Gastrocnemius medialis (tissue), 4 donors: ENCODE measurements at regions of chr5 and their contacts with region 1.

Region 1: DNA sequence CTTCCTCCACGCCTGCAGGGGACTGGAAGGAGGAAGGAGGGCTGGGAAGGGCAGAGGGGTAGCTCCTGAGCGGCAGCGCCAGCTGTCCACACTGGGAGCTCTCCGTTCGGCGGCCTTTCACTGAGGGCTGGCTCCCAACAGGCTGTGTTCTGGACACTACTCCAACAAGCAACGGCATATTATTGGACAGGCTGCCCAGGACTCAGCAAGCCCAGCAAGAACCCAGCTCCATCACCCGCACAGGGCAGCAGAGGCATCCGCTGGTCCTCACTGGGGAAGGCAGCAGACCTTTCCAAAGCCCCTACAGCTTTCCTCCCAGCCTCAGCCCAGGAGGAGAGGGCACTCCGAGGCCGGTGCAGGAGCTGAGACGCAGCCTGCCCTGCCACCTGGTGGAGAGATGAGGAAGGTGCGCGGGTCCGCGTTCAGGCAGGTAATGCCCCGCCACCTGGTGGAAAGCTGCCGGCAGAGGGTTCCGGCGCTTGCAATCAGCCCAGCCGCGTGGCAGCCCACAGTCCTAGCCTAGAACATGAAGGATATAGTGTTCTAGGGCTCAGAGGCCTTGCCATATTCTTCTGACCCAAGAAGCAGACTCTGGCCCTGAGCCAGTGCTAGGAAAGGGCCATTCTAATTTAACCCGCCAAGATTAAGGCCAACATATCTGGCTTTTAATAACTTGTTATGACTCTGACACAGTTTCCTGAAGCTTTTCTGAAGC is 74.4 kb downstream of the NRG2 start:
- DNase-seq: peak; percentile 86 to 91
- ATAC-seq: peak; percentile 83 to 87
- H3K4me3 ChIP-seq: peak overlapping the region in 1 of 4 donors; percentile 17
- H3K27ac ChIP-seq: peak overlapping the region; percentile 79 to 88 (median 82)
- H3K4me1 ChIP-seq: peaks cover 36 to 61% of the 10 kb centered on the region in 2 donors
- H3K27me3 ChIP-seq: no peaks in the 10 kb centered on the region
- CTCF ChIP-seq: peak; percentile 99 to 100 (median 100)
- POLR2A ChIP-seq: no peak

Region 2: GRCh38 chr5:139795074-139796001 is 173.4 kb before region 1 on chr5 and contains the start of gene PSD2:
- in situ Hi-C with region 1: loop called in 2 of 4 experiments (anchors 5 to 10 kb)
- intact Hi-C with region 1: no loop called
- DNase-seq: no peak
- ATAC-seq: peak; percentile 59 to 64
- H3K4me3 ChIP-seq: peak within 1 kb of the TSS; percentile 44 to 53 (median 49)
- H3K27ac ChIP-seq: no peak within 1 kb of the TSS
- H3K4me1 ChIP-seq: peaks cover 0 to 7% of the 10 kb centered on the region in 2 donors
- H3K27me3 ChIP-seq: peaks cover 20 to 28% (median 22%) of the 10 kb centered on the region in 3 donors
- CTCF ChIP-seq: no peak
- POLR2A ChIP-seq: no peak
- total RNA-seq, gene PSD2: 0.10 TPM in 1 of 4 donors, not detected in the others

Region 3: DNA sequence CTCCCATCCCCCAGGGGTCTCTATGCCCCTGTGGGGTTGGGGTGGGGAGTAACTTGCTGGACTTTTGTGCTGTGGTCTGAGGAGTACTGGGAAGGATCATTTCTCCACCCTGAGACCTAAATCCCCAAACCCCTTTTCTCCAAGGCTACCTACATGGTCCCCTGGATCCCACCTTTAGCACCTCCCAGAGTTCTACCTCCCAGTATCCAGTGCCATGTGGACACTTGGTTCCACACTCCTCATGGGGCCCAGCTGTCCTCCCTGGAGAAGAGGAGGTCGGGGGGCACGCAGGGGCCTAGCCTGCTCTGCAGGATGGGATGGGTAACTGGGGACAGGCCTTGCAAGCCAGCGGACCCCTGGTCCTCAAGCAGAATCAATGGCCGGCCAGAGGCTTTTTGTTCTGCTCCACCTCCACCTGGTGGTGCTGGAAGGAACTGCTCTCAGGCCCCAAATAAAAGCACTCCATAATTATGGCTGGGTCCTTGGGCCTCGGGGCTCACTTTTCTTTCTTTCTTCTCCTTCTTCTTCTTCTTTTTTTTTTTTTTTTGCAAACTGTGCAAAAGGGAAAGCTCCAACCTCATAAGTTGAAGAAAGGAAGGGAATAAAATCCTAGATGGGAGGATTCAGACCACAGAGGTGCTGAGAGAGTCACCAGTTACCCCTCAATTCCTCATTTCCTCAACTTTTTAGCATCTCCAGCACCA is 104.7 kb before region 1 on chr5:
- in situ Hi-C with region 1: loop called in 1 of 4 experiments (anchors 25 kb)
- intact Hi-C with region 1: loop called (anchors 5 kb)
- DNase-seq: peak in 1 of 2 donors; percentile 52
- ATAC-seq: peak; percentile 72 to 73
- H3K4me3 ChIP-seq: no peak overlapping the region
- H3K27ac ChIP-seq: peak overlapping the region in 2 of 4 donors; percentile 29 to 47
- H3K4me1 ChIP-seq: peaks cover 9 to 13% of the 10 kb centered on the region in 2 donors
- H3K27me3 ChIP-seq: no peaks in the 10 kb centered on the region
- CTCF ChIP-seq: peak; percentile 70 to 84 (median 83)
- POLR2A ChIP-seq: no peak

Region 4: DNA sequence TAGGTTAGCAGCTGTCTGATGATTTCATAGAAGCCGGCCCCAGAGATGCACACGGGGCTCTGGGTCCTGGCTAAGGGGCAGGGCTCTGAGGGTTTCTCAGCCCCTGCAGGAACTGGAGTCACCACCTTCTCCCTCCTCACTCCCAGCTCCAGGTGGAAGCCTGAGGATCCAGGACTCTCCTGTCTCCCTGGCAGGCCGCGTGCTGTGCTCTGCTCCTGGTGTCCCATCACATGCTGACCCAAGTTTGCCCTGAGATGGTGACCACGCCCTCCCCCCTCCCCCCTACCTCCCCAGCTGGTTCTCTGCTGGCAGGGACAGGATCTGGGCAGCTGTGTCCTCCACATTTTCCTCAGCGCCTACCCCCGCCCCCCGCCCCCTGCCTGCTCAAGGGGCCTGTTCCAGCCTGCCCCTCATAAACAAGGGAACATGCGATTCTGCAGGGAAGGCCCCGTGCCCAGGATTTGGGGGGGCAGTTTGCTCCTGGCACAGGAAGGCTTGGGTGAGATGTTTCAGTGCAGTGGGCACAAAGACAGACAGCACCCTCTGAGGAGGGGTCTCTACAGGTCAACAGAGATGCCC is 85.7 kb before region 1 on chr5:
- in situ Hi-C with region 1: no loop called
- intact Hi-C with region 1: loop called (anchors 5 kb)
- DNase-seq: peak; percentile 53 to 67
- ATAC-seq: peak; percentile 35 to 59
- H3K4me3 ChIP-seq: no peak overlapping the region
- H3K27ac ChIP-seq: peak overlapping the region in 1 of 4 donors; percentile 66
- H3K4me1 ChIP-seq: peaks cover 18 to 19% of the 10 kb centered on the region in 2 donors
- H3K27me3 ChIP-seq: no peaks in the 10 kb centered on the region
- CTCF ChIP-seq: no peak
- POLR2A ChIP-seq: no peak

Region 5: GRCh38 chr5:139903795-139904565 is 64.7 kb before region 1 on chr5:
- in situ Hi-C with region 1: no loop called
- intact Hi-C with region 1: loop called (anchors 2 kb)
- DNase-seq: no peak
- ATAC-seq: peak; percentile 22 to 34
- H3K4me3 ChIP-seq: peak overlapping the region; percentile 53 to 76 (median 62)
- H3K27ac ChIP-seq: peak overlapping the region in 1 of 4 donors; percentile 1
- H3K4me1 ChIP-seq: peaks cover 12 to 26% of the 10 kb centered on the region in 2 donors
- H3K27me3 ChIP-seq: no peaks in the 10 kb centered on the region
- CTCF ChIP-seq: no peak
- POLR2A ChIP-seq: peak in 1 of 2 donors; percentile 12

Region 6: GRCh38 chr5:139949710-139950109 is 19.0 kb before region 1 on chr5:
- in situ Hi-C with region 1: no loop called
- intact Hi-C with region 1: loop called (anchors 1 kb)
- DNase-seq: peak in 1 of 2 donors; percentile 79
- ATAC-seq: peak in 1 of 2 donors; percentile 28
- H3K4me3 ChIP-seq: no peak overlapping the region
- H3K27ac ChIP-seq: peak overlapping the region; percentile 69 to 87 (median 80)
- H3K4me1 ChIP-seq: peaks cover 50 to 53% of the 10 kb centered on the region in 2 donors
- H3K27me3 ChIP-seq: no peaks in the 10 kb centered on the region
- CTCF ChIP-seq: no peak
- POLR2A ChIP-seq: no peak

Region 7: GRCh38 chr5:140042643-140043500 is 74.2 kb after region 1 on chr5 and contains the start of gene NRG2:
- in situ Hi-C with region 1: no loop called
- intact Hi-C with region 1: loop called (anchors 1 kb)
- DNase-seq: peak; percentile 67 to 86
- ATAC-seq: peak; percentile 21 to 51
- H3K4me3 ChIP-seq: peak within 1 kb of the TSS; percentile 82 to 97 (median 87)
- H3K27ac ChIP-seq: peak within 1 kb of the TSS; percentile 98 to 99 (median 98)
- H3K4me1 ChIP-seq: peaks cover 22 to 29% of the 10 kb centered on the region in 2 donors
- H3K27me3 ChIP-seq: no peaks in the 10 kb centered on the region
- CTCF ChIP-seq: peak; percentile 68 to 84 (median 72)
- POLR2A ChIP-seq: peak; percentile 74 to 79
- total RNA-seq, gene NRG2: 10.3 to 28.8 (median 20.0) TPM